Posterior cingulate gyrus (tissue), 11 donors: ENCODE measurements at regions of chr2 and their contacts with region 1.

Region 1: GRCh38 chr2:104412384-104412783 is 441.5 kb upstream of the POU3F3 start:
- DNase-seq: peak in 7 of 10 donors; percentile 32 to 91 (median 67)

Region 2: GRCh38 chr2:104033399-104033798 is 379.0 kb before region 1 on chr2:
- intact Hi-C with region 1: loop called (anchors 10 kb)
- DNase-seq: no peak

Region 3: DNA sequence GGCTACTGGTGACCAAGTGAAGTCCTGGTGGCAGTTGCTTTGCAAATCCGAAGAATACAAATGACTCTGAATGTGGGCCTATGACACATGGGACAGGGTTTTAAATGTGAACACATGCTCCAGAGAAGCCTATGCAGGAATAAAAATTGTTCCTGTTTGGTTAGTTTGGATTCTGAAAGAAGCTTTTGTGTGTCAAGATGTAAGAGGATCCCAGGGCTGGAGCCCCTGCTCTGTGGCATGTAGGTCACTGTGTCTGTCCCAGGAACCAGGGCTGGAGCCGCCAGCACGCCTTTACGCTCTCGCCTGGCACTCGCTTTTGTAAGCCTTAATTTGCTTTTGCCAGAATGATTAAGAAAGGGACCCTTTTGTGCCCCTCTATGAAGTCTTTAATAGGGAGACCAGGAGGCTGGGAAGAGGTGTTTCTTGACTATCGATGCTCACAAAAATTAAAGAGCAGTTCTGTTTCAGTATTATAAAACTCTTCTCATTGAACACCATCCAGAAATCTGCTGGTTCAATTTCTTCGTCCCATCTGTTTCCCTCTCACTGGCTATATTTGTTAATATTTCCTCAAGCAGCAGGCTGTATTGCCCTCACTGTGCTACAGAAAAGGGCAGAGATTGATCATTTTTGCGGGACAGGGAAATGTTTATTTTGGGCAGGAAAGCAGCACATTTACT is 91.1 kb before region 1 on chr2:
- intact Hi-C with region 1: no loop called
- DNase-seq: peak in 4 of 10 donors; percentile 3 to 75 (median 44)